Activated CD8-positive, alpha-beta T cell treated with anti-CD3 and anti-CD28 coated beads for 36 hours (primary cell): ENCODE measurements at regions of chr5 and their contacts with region 1.

Region 1: GRCh38 chr5:177113566-177114424 is 19.8 kb upstream of the NSD1 start:
- DNase-seq: peak; percentile 86
- ATAC-seq: peak; percentile 72
- H3K4me3 Mint-ChIP-seq: no peak overlapping the region
- H3K27ac Mint-ChIP-seq: no peak overlapping the region
- H3K4me1 Mint-ChIP-seq: peaks cover 18% of the 10 kb centered on the region
- H3K27me3 Mint-ChIP-seq: no peaks in the 10 kb centered on the region
- CTCF ChIP-seq: peak; percentile 98

Region 2: DNA sequence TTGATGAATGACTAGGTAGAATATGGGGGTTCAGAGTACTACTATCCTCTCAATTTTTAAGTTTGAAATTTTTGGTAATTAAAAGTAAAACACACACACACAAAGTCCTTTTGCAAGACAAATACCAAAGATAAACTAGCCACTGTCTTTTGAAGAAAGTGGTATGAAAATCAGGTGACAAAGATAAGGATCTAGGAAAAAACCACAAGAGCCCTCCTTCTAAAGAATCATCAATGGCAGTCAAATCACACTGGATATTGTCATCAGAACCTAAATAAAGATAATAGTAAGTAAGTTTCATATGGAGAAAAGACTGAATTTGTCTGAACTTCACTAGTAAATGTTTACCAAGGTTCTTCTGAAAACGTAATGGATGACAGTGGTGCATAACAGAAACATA is 184.1 kb before region 1 on chr5:
- CTCF ChIA-PET with region 1: no interaction called
- POLR2A ChIA-PET with region 1: no interaction called
- intact Hi-C with region 1: no loop called
- DNase-seq: no peak
- ATAC-seq: no peak
- H3K4me3 Mint-ChIP-seq: no peak overlapping the region
- H3K27ac Mint-ChIP-seq: no peak overlapping the region
- H3K4me1 Mint-ChIP-seq: peaks cover 14% of the 10 kb centered on the region
- H3K27me3 Mint-ChIP-seq: no peaks in the 10 kb centered on the region
- CTCF ChIP-seq: no peak

Region 3: GRCh38 chr5:176994460-176995121 is 119.2 kb before region 1 on chr5:
- CTCF ChIA-PET with region 1: no interaction called
- POLR2A ChIA-PET with region 1: no interaction called
- intact Hi-C with region 1: no loop called
- DNase-seq: no peak
- ATAC-seq: no peak
- H3K4me3 Mint-ChIP-seq: no peak overlapping the region
- H3K27ac Mint-ChIP-seq: no peak overlapping the region
- H3K4me1 Mint-ChIP-seq: peaks cover 32% of the 10 kb centered on the region
- H3K27me3 Mint-ChIP-seq: no peaks in the 10 kb centered on the region
- CTCF ChIP-seq: no peak

Region 4: GRCh38 chr5:177040814-177041420 is 72.9 kb before region 1 on chr5:
- CTCF ChIA-PET with region 1: no interaction called
- POLR2A ChIA-PET with region 1: no interaction called
- intact Hi-C with region 1: no loop called
- DNase-seq: no peak
- ATAC-seq: no peak
- H3K4me3 Mint-ChIP-seq: no peak overlapping the region
- H3K27ac Mint-ChIP-seq: no peak overlapping the region
- H3K4me1 Mint-ChIP-seq: peaks cover 14% of the 10 kb centered on the region
- H3K27me3 Mint-ChIP-seq: no peaks in the 10 kb centered on the region
- CTCF ChIP-seq: no peak

Region 5: GRCh38 chr5:177071666-177072385 is 42.0 kb before region 1 on chr5:
- CTCF ChIA-PET with region 1: interaction called, 150 read pairs
- POLR2A ChIA-PET with region 1: interaction called, 4 read pairs
- intact Hi-C with region 1: loop called (anchors 5 kb)
- DNase-seq: peak; percentile 87
- ATAC-seq: peak; percentile 96
- H3K4me3 Mint-ChIP-seq: no peak overlapping the region
- H3K27ac Mint-ChIP-seq: no peak overlapping the region
- H3K4me1 Mint-ChIP-seq: peaks cover 3% of the 10 kb centered on the region
- H3K27me3 Mint-ChIP-seq: no peaks in the 10 kb centered on the region
- CTCF ChIP-seq: peak; percentile 88

Region 6: GRCh38 chr5:177133091-177133852 is 19.5 kb after region 1 on chr5 and contains the start of gene NSD1:
- CTCF ChIA-PET with region 1: interaction called, 36 read pairs
- POLR2A ChIA-PET with region 1: interaction called, 10 read pairs
- intact Hi-C with region 1: no loop called
- DNase-seq: peak; percentile 90
- ATAC-seq: peak; percentile 83
- H3K4me3 Mint-ChIP-seq: peak within 1 kb of the TSS; percentile 89
- H3K27ac Mint-ChIP-seq: peak within 1 kb of the TSS; percentile 87
- H3K4me1 Mint-ChIP-seq: peaks cover 46% of the 10 kb centered on the region
- H3K27me3 Mint-ChIP-seq: no peaks in the 10 kb centered on the region
- CTCF ChIP-seq: no peak
- total RNA-seq, gene NSD1: 60.1 to 64.8 TPM

Region 7: GRCh38 chr5:177228751-177229150 is 115.0 kb after region 1 on chr5:
- CTCF ChIA-PET with region 1: interaction called, 7 read pairs
- POLR2A ChIA-PET with region 1: interaction called, 3 read pairs
- intact Hi-C with region 1: loop called (anchors 10 kb)
- DNase-seq: no peak
- ATAC-seq: no peak
- H3K4me3 Mint-ChIP-seq: no peak overlapping the region
- H3K27ac Mint-ChIP-seq: no peak overlapping the region
- H3K4me1 Mint-ChIP-seq: peaks cover 17% of the 10 kb centered on the region
- H3K27me3 Mint-ChIP-seq: no peaks in the 10 kb centered on the region
- CTCF ChIP-seq: no peak

Region 8: DNA sequence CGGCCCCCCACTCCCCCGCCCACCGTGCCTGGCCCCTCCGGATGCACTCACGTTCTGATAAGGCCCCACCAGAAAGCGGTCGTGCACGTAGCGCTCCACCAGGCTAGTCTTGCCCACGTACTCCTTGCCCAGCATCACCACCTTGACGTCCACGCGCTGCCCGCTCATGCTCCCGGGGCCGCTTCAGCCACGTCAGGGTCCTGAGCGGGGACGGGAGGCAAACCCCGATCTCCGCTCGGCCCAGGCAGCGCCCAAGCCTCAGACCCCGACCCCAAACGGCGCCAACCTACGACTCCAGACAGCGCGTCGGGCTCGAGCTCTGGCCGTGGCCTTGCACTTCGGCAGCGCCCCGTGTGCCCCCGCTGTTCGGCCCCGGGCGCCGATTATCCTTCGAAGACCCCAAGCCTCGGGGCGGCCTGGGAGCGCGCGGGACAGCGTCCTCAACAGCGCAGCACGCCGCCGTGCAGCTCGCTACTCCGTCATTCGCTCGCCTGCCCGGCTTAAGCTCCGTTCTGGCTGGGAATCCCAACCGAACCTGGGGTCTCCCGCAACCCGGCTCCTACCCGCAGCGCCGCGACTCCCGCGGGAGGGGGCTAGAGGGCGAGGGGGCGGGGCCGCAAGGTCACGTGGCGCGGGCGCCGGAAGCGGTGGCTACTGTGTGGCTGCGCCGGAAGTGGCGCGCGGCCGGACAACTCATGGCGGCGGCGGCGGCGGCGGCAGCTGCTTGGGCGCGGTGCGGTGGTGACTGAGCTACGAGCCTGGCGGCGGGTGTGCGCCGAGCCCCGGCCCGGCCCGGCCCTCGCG is 189.5 kb after region 1 on chr5 and contains the starts of genes PRELID1 and RAB24:
- CTCF ChIA-PET with region 1: interaction called, 43 read pairs
- POLR2A ChIA-PET with region 1: interaction called, 4 read pairs
- intact Hi-C with region 1: loop called (anchors 5 kb)
- DNase-seq: peak; percentile 91
- ATAC-seq: peak; percentile 72
- H3K4me3 Mint-ChIP-seq: peak within 1 kb of the TSS; percentile 98
- H3K27ac Mint-ChIP-seq: peak within 1 kb of the TSS; percentile 91
- H3K4me1 Mint-ChIP-seq: peaks cover 57% of the 10 kb centered on the region
- H3K27me3 Mint-ChIP-seq: no peaks in the 10 kb centered on the region
- CTCF ChIP-seq: peak; percentile 51
- total RNA-seq, gene PRELID1: 222 to 233 TPM
- total RNA-seq, gene RAB24: 26.6 TPM